ENCODE measurements at regions of chr16 and their contacts with region 1.

Region 1: DNA sequence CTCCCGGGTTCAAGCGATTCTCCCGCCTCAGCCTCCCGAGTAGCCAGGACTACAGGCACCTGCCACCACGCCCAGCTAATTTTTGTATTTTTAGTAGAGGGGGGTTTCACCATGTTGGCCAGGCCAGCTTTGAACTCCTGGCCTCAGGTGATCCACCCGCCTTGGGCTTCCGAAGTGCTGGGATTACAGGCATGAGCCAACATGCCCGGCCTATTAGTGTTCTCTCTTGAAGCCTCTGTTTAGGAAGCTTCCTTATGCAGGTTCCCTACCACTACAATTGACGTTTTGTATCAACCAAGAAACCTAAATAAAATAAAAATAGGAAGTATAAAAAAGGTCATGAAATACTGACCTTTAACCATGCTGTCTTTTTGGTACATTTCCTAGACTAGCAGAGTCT is 16.0 kb downstream of the CHST5 start:
- DNase-seq: no peak
- ATAC-seq: no peak
- H3K4me3 ChIP-seq: no peak overlapping the region
- H3K27ac ChIP-seq: no peak overlapping the region
- H3K4me1 ChIP-seq: no peaks in the 10 kb centered on the region
- H3K27me3 ChIP-seq: no peaks in the 10 kb centered on the region
- CTCF ChIP-seq: no peak
- EP300 ChIP-seq: no peak
- POLR2A ChIP-seq: no peak
- RAD21 ChIP-seq: no peak

Region 2: DNA sequence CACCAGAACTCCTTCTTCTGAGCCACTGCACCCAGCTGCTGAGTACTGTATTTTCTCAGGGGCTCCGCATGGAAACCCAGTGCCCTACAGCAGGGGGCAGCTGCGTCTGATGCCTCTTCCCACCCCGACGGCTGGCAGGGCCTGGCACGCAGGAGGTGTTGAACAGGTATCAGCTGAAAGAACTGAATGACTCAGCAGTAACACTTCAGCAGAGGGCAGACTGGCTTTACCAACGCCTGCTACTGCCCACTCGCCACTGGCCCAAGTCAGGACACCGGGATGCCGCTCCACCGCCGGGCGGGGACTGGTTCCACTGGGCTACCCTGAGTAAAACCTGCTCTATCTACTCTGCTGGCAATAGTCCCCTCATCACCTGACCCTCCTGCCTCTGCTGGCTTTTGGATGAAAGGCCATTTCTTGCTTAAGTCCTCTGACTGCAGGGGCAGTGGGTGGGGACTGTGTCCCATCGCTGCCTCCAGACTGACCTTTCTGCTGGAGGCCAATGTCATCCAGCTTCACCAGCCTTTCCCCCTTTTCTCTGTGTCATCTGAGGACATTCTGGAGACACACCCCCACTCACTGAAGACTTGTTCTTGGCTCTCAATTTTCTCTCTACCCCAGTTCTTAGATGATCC is 644.9 kb before region 1 on chr16:
- CTCF ChIA-PET with region 1: no interaction called
- POLR2A ChIA-PET with region 1: no interaction called
- RAD21 ChIA-PET with region 1: no interaction called
- SMC1A ChIA-PET with region 1: no interaction called
- in situ Hi-C with region 1: no loop called
- intact Hi-C with region 1: no loop called
- DNase-seq: no peak
- ATAC-seq: no peak
- H3K4me3 ChIP-seq: no peak overlapping the region
- H3K27ac ChIP-seq: no peak overlapping the region
- H3K4me1 ChIP-seq: no peaks in the 10 kb centered on the region
- H3K27me3 ChIP-seq: no peaks in the 10 kb centered on the region
- CTCF ChIP-seq: no peak
- EP300 ChIP-seq: no peak
- POLR2A ChIP-seq: no peak
- RAD21 ChIP-seq: no peak

Region 3: GRCh38 chr16:75099756-75100602 is 419.9 kb before region 1 on chr16:
- CTCF ChIA-PET with region 1: no interaction called
- POLR2A ChIA-PET with region 1: no interaction called
- RAD21 ChIA-PET with region 1: no interaction called
- SMC1A ChIA-PET with region 1: no interaction called
- in situ Hi-C with region 1: no loop called
- intact Hi-C with region 1: no loop called
- DNase-seq: no peak
- ATAC-seq: peak; percentile 50
- H3K4me3 ChIP-seq: no peak overlapping the region
- H3K27ac ChIP-seq: 0 out of 2 replicates have a peak overlapping the region, but pooled peaks have one; percentile 39
- H3K4me1 ChIP-seq: peaks cover 23% of the 10 kb centered on the region
- H3K27me3 ChIP-seq: no peaks in the 10 kb centered on the region
- CTCF ChIP-seq: no peak
- EP300 ChIP-seq: no peak
- POLR2A ChIP-seq: no peak
- RAD21 ChIP-seq: no peak

Region 4: GRCh38 chr16:75342308-75342829 is 177.5 kb before region 1 on chr16:
- CTCF ChIA-PET with region 1: no interaction called
- POLR2A ChIA-PET with region 1: no interaction called
- RAD21 ChIA-PET with region 1: no interaction called
- SMC1A ChIA-PET with region 1: no interaction called
- in situ Hi-C with region 1: no loop called
- intact Hi-C with region 1: no loop called
- DNase-seq: no peak
- ATAC-seq: no peak
- H3K4me3 ChIP-seq: no peak overlapping the region
- H3K27ac ChIP-seq: no peak overlapping the region
- H3K4me1 ChIP-seq: no peaks in the 10 kb centered on the region
- H3K27me3 ChIP-seq: no peaks in the 10 kb centered on the region
- CTCF ChIP-seq: no peak
- EP300 ChIP-seq: no peak
- POLR2A ChIP-seq: no peak
- RAD21 ChIP-seq: no peak

Region 5: GRCh38 chr16:75486676-75487313 is 33.1 kb before region 1 on chr16:
- CTCF ChIA-PET with region 1: interaction called, 11 read pairs
- POLR2A ChIA-PET with region 1: interaction called, 3 read pairs
- RAD21 ChIA-PET with region 1: interaction called, 15 read pairs
- SMC1A ChIA-PET with region 1: interaction called, 6 read pairs
- in situ Hi-C with region 1: no loop called
- intact Hi-C with region 1: no loop called
- DNase-seq: peak; percentile 45
- ATAC-seq: peak; percentile 83
- H3K4me3 ChIP-seq: no peak overlapping the region
- H3K27ac ChIP-seq: peak overlapping the region; percentile 74
- H3K4me1 ChIP-seq: peaks cover 41% of the 10 kb centered on the region
- H3K27me3 ChIP-seq: no peaks in the 10 kb centered on the region
- CTCF ChIP-seq: no peak
- EP300 ChIP-seq: no peak
- POLR2A ChIP-seq: no peak
- RAD21 ChIP-seq: no peak

Region 6: GRCh38 chr16:75957870-75958269 is 438.0 kb after region 1 on chr16:
- CTCF ChIA-PET with region 1: no interaction called
- POLR2A ChIA-PET with region 1: no interaction called
- RAD21 ChIA-PET with region 1: no interaction called
- SMC1A ChIA-PET with region 1: no interaction called
- in situ Hi-C with region 1: no loop called
- intact Hi-C with region 1: no loop called
- DNase-seq: no peak
- ATAC-seq: no peak
- H3K4me3 ChIP-seq: no peak overlapping the region
- H3K27ac ChIP-seq: no peak overlapping the region
- H3K4me1 ChIP-seq: no peaks in the 10 kb centered on the region
- H3K27me3 ChIP-seq: no peaks in the 10 kb centered on the region
- CTCF ChIP-seq: no peak
- EP300 ChIP-seq: no peak
- POLR2A ChIP-seq: no peak
- RAD21 ChIP-seq: no peak